ENCODE measurements at regions of chr14 and their contacts with region 1.

Region 1: GRCh38 chr14:69107407-69108003 is 45.4 kb downstream of the DCAF5 start:
- DNase-seq: no peak

Region 2: DNA sequence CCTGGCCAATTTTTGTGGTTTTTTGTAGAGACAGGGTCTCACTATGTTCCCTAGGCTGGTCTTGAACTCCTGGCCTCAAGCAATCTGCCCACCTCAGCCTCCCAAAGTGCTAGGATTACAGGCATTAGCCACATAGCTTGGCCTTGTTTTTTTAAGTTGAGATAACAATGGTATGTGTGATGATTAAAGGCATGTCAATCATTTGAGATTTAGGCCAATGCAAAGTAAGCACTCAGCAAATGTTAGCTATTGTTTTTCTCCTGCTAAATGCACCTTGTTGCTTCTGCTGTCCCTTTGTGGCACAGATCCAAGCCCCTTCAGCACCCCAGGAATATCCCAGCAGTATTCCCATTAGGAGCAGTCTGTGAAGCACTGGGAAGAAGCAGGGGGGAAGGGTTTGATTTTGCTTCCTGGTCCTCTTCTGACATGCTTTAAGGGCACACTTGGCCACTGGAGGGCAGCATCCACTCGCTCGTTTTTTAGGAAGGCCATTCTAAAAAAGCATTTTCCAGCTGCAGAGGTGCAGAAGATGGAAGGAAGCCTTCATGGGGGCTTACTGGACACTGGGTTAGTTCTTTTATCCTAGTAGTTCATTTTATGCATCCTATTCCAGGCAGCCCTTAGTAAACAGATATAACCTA is 244.4 kb before region 1 on chr14:
- intact Hi-C with region 1: loop called (anchors 5 kb)
- DNase-seq: no peak